MCF 10A (cell line): ENCODE measurements at regions of chr1 and their contacts with region 1.

Region 1: GRCh38 chr1:42479599-42479998 is 16.5 kb downstream of the CCDC30 start:
- DNase-seq: peak; percentile 16
- H3K4me3 Mint-ChIP-seq: no peak overlapping the region
- H3K27ac Mint-ChIP-seq: no peak overlapping the region
- H3K4me1 Mint-ChIP-seq: no peaks in the 10 kb centered on the region
- H3K27me3 Mint-ChIP-seq: no peaks in the 10 kb centered on the region
- CTCF ChIP-seq: no peak

Region 2: GRCh38 chr1:42462828-42463763 is 16.5 kb before region 1 on chr1 and contains the start of gene CCDC30:
- CTCF ChIA-PET with region 1: no interaction called
- POLR2A ChIA-PET with region 1: interaction called, 11 read pairs
- intact Hi-C with region 1: no loop called
- DNase-seq: peak; percentile 99
- H3K4me3 Mint-ChIP-seq: peak within 1 kb of the TSS; percentile 81
- H3K27ac Mint-ChIP-seq: peak within 1 kb of the TSS; percentile 89
- H3K4me1 Mint-ChIP-seq: peaks cover 11% of the 10 kb centered on the region
- H3K27me3 Mint-ChIP-seq: no peaks in the 10 kb centered on the region
- CTCF ChIP-seq: no peak
- total RNA-seq, gene CCDC30: 2.2 and 3.2 TPM in 2 replicates

Region 3: GRCh38 chr1:42551180-42551579 is 71.6 kb after region 1 on chr1:
- CTCF ChIA-PET with region 1: no interaction called
- POLR2A ChIA-PET with region 1: no interaction called
- intact Hi-C with region 1: no loop called
- DNase-seq: no peak
- H3K4me3 Mint-ChIP-seq: no peak overlapping the region
- H3K27ac Mint-ChIP-seq: no peak overlapping the region
- H3K4me1 Mint-ChIP-seq: no peaks in the 10 kb centered on the region
- H3K27me3 Mint-ChIP-seq: peaks cover 12% of the 10 kb centered on the region
- CTCF ChIP-seq: no peak

Region 4: DNA sequence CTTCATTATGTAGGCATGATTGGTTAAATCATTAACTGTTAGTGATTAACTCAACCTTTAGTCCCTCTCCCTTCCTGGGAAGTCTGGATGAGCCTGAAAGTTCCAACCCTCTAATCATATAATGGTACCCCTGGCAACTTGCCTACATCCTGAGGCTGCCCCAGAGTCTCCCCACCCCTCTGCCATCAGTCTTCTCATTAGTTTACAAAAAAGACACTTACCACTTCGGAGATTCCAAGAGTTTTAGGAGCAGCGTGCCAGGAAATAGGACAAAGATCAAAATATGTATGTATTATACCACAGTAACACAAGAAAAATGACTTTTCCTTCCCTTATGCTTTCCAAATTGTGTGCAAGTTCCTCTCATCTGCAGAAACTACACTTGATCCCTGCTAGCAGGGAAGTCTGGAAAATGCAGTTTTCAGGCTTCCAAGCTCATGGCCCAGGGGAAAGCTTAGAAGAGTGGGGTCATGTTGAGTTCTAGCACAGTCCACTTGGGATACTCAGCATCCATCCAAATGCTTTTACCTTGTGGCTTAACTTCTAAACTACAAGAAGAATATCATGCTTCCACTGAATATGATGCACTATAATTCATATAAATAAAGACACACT is 114.0 kb after region 1 on chr1:
- CTCF ChIA-PET with region 1: no interaction called
- POLR2A ChIA-PET with region 1: no interaction called
- intact Hi-C with region 1: no loop called
- DNase-seq: no peak
- H3K4me3 Mint-ChIP-seq: no peak overlapping the region
- H3K27ac Mint-ChIP-seq: no peak overlapping the region
- H3K4me1 Mint-ChIP-seq: no peaks in the 10 kb centered on the region
- H3K27me3 Mint-ChIP-seq: no peaks in the 10 kb centered on the region
- CTCF ChIP-seq: no peak